Dendritic cell treated with granulocyte-macrophage colony-stimulating factor and Interleukin-4, amounts not matched to agents 40 ng/mL and 50 ng/mL, for 4 days (primary cell): ENCODE measurements at regions of chr9 and their contacts with region 1.

Region 1: DNA sequence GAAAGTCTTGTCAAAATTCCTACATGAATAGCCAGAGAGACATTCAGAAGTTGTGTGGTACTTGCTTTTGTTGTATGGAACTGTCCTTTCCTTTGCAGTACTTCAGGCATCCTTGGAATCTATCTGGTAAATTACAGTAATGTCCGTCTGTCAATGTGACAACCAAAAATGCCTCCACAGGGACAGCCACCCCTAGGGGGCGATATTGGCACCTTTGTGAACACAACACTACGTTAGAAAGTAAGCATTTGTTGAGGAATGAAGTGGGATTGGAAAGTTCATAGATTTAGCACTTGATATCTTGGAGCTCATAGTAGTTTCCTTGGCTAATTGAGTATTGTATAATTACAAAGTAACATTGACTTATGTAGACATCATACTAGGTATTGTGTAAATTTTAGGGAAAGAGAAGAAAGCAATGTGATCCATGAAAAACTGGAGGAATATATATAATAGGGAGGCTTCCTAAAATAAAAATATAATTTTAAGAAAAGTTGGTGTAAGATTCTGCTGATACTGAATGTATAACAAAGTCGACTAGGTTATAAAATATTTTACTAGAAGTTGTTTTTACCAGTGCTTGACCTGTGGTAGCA is 32.7 kb downstream of the TMEFF1 start:
- H3K4me3 Mint-ChIP-seq: no peak overlapping the region
- H3K27ac Mint-ChIP-seq: no peak overlapping the region
- H3K4me1 Mint-ChIP-seq: no peaks in the 10 kb centered on the region
- H3K27me3 Mint-ChIP-seq: no peaks in the 10 kb centered on the region

Region 2: GRCh38 chr9:100598641-100599145 is 93.0 kb after region 1 on chr9:
- intact Hi-C with region 1: loop called (anchors 10 kb)
- H3K4me3 Mint-ChIP-seq: peak overlapping the region; percentile 74
- H3K27ac Mint-ChIP-seq: peak overlapping the region; percentile 28
- H3K4me1 Mint-ChIP-seq: peaks cover 18% of the 10 kb centered on the region
- H3K27me3 Mint-ChIP-seq: peaks cover 28% of the 10 kb centered on the region

Region 3: GRCh38 chr9:101119206-101119819 is 613.7 kb after region 1 on chr9:
- intact Hi-C with region 1: no loop called
- H3K4me3 Mint-ChIP-seq: no peak overlapping the region
- H3K27ac Mint-ChIP-seq: no peak overlapping the region
- H3K4me1 Mint-ChIP-seq: no peaks in the 10 kb centered on the region
- H3K27me3 Mint-ChIP-seq: no peaks in the 10 kb centered on the region

Region 4: GRCh38 chr9:101176384-101176783 is 670.7 kb after region 1 on chr9:
- intact Hi-C with region 1: no loop called
- H3K4me3 Mint-ChIP-seq: no peak overlapping the region
- H3K27ac Mint-ChIP-seq: no peak overlapping the region
- H3K4me1 Mint-ChIP-seq: no peaks in the 10 kb centered on the region
- H3K27me3 Mint-ChIP-seq: no peaks in the 10 kb centered on the region